ENCODE measurements at regions of chr5 and their contacts with region 1.

Region 1: DNA sequence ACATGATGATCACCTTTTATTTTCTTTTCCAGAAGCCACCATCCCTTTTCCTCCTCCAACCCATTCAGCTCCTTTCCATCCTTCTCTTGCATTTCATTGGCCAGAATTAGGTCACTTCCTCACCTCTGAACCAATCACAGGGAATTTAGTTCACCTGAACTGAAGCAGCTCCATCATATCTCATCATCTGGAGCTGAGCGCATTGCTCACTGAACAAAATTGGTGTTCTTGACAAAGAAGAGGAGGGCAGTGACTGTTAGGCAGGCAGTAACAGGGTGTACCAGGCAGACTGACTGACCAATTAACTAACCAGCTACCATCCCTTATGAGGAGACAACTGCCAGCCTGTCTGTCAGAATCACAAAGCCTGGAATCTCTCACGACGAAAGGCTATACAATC is 1.8 kb upstream of the ZNF354A start:
- DNase-seq: no peak
- ATAC-seq: no peak
- H3K4me3 ChIP-seq: no peak overlapping the region
- H3K4me3 Mint-ChIP-seq: peak overlapping the region; percentile 8
- H3K27ac ChIP-seq: no peak overlapping the region
- H3K27ac Mint-ChIP-seq: no peak overlapping the region
- H3K4me1 ChIP-seq: peaks cover 4% of the 10 kb centered on the region
- H3K4me1 Mint-ChIP-seq: peaks cover 14% of the 10 kb centered on the region
- H3K27me3 ChIP-seq: no peaks in the 10 kb centered on the region
- H3K27me3 Mint-ChIP-seq: no peaks in the 10 kb centered on the region
- CTCF ChIP-seq: no peak

Region 2: DNA sequence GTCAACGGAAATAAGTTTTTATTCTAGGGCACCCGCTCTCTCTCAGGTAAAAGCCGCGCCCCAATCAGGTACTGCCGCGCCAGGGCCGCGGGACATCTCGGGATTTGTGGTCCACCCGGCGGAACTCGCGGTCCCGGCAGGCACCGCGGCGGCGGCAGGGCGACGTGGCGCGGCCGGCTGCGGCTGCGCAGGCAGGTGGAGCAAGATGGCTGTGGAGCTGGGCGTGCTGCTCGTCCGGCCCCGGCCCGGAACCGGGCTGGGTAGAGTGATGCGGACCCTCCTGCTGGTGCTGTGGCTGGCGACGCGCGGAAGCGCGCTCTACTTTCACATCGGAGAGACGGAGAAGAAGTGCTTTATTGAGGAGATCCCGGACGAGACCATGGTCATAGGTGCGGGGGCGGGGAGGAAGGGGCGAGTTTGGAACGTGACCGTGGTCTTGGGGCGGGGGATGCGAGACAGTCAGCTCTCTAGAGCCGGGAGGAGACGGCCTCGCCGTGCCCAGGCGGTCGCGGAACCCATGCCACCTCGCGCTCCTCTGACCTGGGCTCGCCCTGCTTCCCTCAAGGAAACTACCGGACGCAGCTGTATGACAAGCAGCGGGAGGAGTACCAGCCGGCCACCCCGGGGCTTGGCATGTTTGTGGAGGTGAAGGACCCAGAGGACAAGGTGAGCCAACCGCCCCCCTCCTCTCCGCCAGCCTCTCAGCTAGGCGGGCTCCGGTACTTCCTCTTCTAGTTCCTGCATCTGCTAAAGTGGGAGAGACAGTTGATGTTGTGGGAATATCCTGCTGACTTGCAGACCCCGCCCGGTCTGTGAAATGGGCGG is 1140.1 kb before region 1 on chr5 and contains the start of gene TMED9:
- CTCF ChIA-PET with region 1: no interaction called
- POLR2A ChIA-PET with region 1: no interaction called
- intact Hi-C with region 1: loop called in 1 of 2 experiments (anchors 5 kb)
- DNase-seq: peak; percentile 69 to 92 (median 86)
- ATAC-seq: peak; percentile 98
- H3K4me3 ChIP-seq: peak within 1 kb of the TSS; percentile 97 to 100
- H3K4me3 Mint-ChIP-seq: peak within 1 kb of the TSS; percentile 99
- H3K27ac ChIP-seq: peak within 1 kb of the TSS; percentile 78 to 88
- H3K27ac Mint-ChIP-seq: peak within 1 kb of the TSS; percentile 93
- H3K4me1 ChIP-seq: peaks cover 19% of the 10 kb centered on the region
- H3K4me1 Mint-ChIP-seq: peaks cover 24% of the 10 kb centered on the region
- H3K27me3 ChIP-seq: peaks cover 0 to 3% of the 10 kb centered on the region in 2 experiments
- H3K27me3 Mint-ChIP-seq: peaks cover 13% of the 10 kb centered on the region
- CTCF ChIP-seq: no peak
- total RNA-seq, gene TMED9: 42.4 to 52.2 TPM

Region 3: DNA sequence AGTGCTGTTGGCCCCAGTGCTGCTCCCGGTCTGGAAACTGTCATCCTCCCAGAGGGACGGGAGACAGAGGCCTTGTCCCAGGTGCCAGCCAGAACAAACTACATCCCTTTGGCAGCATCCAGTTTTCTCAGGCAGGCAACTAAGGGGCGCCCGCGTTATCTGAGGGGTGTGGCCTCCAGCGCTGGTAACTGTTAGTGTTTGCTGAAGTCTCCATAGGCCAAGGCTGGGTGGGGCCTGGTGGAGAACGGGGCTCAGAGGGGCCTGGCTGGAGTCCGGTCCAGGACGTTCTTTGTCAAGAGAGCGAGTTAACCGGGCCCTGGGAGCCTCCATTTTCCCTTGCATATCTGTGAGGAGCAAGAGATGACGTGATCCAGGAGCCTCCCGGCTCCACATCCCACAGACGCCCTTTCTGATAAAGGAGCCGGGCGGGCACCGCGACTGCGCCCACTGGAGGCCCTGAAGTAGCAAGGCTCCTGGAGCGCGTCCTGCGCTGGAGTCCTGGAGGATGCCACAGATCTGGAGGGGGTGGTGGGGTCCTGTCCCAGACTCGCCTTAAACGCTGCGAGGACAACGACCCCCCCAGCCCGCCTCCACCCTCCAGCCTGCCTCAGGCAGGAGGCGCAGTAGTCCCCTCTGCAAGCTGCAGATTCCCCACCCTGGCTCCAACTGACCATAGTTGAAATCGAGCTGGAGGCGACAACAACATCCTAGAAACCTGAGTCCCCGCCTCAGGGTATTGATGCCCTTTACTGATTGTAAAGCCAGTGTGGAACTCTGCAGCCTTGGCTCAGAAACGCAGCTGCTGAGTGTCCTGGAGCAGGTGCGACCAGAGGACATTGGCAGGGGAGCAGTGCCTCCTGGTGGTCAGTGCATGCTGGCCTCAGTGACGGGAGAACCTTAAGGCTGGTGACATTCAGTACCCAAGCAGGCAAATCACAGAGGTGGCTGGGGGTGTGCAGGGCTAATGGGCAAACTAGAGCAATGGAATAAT is 106.7 kb after region 1 on chr5:
- CTCF ChIA-PET with region 1: no interaction called
- POLR2A ChIA-PET with region 1: no interaction called
- intact Hi-C with region 1: loop called (anchors 1 kb)
- DNase-seq: peak; percentile 6 to 65 (median 45)
- ATAC-seq: peak; percentile 63
- H3K4me3 ChIP-seq: no peak overlapping the region
- H3K4me3 Mint-ChIP-seq: no peak overlapping the region
- H3K27ac ChIP-seq: no peak overlapping the region
- H3K27ac Mint-ChIP-seq: no peak overlapping the region
- H3K4me1 ChIP-seq: no peaks in the 10 kb centered on the region
- H3K4me1 Mint-ChIP-seq: no peaks in the 10 kb centered on the region
- H3K27me3 ChIP-seq: no peaks in the 10 kb centered on the region
- H3K27me3 Mint-ChIP-seq: peaks cover 3% of the 10 kb centered on the region
- CTCF ChIP-seq: peak; percentile 20

Region 4: GRCh38 chr5:179023528-179024430 is 291.5 kb after region 1 on chr5 and contains the start of gene ZNF879:
- CTCF ChIA-PET with region 1: no interaction called
- POLR2A ChIA-PET with region 1: no interaction called
- intact Hi-C with region 1: loop called (anchors 1 kb)
- DNase-seq: peak; percentile 86 to 97 (median 94)
- ATAC-seq: peak; percentile 92
- H3K4me3 ChIP-seq: peak within 1 kb of the TSS; percentile 51 to 70
- H3K4me3 Mint-ChIP-seq: peak within 1 kb of the TSS; percentile 96
- H3K27ac ChIP-seq: peak within 1 kb of the TSS; percentile 50 to 59
- H3K27ac Mint-ChIP-seq: peak within 1 kb of the TSS; percentile 82
- H3K4me1 ChIP-seq: peaks cover 9% of the 10 kb centered on the region
- H3K4me1 Mint-ChIP-seq: peaks cover 17% of the 10 kb centered on the region
- H3K27me3 ChIP-seq: no peaks in the 10 kb centered on the region
- H3K27me3 Mint-ChIP-seq: peaks cover 7% of the 10 kb centered on the region
- CTCF ChIP-seq: no peak
- total RNA-seq, gene ZNF879: 4.5 to 5.8 TPM

Region 5: GRCh38 chr5:179166886-179167841 is 434.9 kb after region 1 on chr5:
- CTCF ChIA-PET with region 1: interaction called, 4 read pairs
- POLR2A ChIA-PET with region 1: no interaction called
- intact Hi-C with region 1: loop called in 1 of 2 experiments (anchors 1 kb)
- DNase-seq: peak; percentile 38 to 85 (median 60)
- ATAC-seq: peak; percentile 93
- H3K4me3 ChIP-seq: peak overlapping the region; percentile 43 to 57
- H3K4me3 Mint-ChIP-seq: peak overlapping the region; percentile 58
- H3K27ac ChIP-seq: no peak overlapping the region
- H3K27ac Mint-ChIP-seq: no peak overlapping the region
- H3K4me1 ChIP-seq: peaks cover 10% of the 10 kb centered on the region
- H3K4me1 Mint-ChIP-seq: peaks cover 2% of the 10 kb centered on the region
- H3K27me3 ChIP-seq: no peaks in the 10 kb centered on the region
- H3K27me3 Mint-ChIP-seq: peaks cover 11% of the 10 kb centered on the region
- CTCF ChIP-seq: peak; percentile 95